ENCODE measurements at regions of chr2 and their contacts with region 1.

Region 1: GRCh38 chr2:37376421-37377186 is 32.2 kb downstream of the QPCT start:
- DNase-seq: peak; percentile 66
- ATAC-seq: peak; percentile 83
- H3K4me3 Mint-ChIP-seq: peak overlapping the region; percentile 44
- H3K27ac Mint-ChIP-seq: peak overlapping the region; percentile 83
- H3K4me1 Mint-ChIP-seq: peaks cover 34% of the 10 kb centered on the region
- H3K27me3 Mint-ChIP-seq: peaks cover 47% of the 10 kb centered on the region

Region 2: DNA sequence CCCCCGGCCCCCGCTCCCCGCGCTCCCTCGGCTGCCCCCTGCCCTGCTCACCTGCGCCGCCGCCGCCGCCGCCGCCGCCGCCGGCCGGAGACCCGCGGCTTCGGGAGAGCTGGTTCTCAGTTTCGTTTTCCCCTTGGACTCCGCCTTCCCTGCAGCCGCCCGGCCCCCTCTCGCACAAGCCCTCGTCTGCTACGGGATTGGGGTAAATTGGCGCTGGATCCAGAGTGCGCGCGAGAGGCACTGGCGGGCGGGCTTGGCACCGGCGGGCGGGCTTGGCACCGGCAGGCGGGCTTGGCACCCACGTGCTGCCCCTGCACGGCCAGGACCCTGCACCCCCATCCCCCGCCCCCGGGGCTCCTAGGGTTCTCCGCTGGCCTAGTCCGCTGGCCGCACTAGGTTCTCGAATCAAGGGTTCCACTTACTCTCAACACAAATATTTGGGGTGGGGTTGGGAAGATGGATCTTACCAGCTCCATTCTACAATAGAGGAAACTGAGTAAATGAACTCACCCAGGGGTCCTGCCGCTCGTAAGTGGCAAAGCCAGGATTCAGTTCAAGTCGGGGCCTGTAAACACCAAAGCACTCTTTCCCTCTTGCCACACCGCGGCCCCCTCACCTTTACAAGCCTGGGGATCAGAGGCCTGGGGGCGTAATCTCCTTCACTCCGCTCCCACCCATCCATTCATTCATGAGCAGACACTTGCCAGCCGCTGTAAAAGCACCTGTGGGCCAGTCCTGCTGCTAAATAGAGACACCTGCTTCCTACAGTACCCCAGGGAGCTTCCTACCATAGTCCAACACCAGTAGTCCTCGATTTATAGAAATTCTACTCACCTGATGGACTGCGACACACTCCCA is 219.5 kb before region 1 on chr2 and contains the start of gene EIF2AK2:
- CTCF ChIA-PET with region 1: no interaction called
- POLR2A ChIA-PET with region 1: no interaction called
- intact Hi-C with region 1: no loop called
- DNase-seq: peak; percentile 89
- ATAC-seq: peak; percentile 93
- H3K4me3 Mint-ChIP-seq: peak within 1 kb of the TSS; percentile 85
- H3K27ac Mint-ChIP-seq: peak within 1 kb of the TSS; percentile 89
- H3K4me1 Mint-ChIP-seq: peaks cover 40% of the 10 kb centered on the region
- H3K27me3 Mint-ChIP-seq: no peaks in the 10 kb centered on the region
- total RNA-seq, gene EIF2AK2: 66.4 to 70.6 TPM

Region 3: DNA sequence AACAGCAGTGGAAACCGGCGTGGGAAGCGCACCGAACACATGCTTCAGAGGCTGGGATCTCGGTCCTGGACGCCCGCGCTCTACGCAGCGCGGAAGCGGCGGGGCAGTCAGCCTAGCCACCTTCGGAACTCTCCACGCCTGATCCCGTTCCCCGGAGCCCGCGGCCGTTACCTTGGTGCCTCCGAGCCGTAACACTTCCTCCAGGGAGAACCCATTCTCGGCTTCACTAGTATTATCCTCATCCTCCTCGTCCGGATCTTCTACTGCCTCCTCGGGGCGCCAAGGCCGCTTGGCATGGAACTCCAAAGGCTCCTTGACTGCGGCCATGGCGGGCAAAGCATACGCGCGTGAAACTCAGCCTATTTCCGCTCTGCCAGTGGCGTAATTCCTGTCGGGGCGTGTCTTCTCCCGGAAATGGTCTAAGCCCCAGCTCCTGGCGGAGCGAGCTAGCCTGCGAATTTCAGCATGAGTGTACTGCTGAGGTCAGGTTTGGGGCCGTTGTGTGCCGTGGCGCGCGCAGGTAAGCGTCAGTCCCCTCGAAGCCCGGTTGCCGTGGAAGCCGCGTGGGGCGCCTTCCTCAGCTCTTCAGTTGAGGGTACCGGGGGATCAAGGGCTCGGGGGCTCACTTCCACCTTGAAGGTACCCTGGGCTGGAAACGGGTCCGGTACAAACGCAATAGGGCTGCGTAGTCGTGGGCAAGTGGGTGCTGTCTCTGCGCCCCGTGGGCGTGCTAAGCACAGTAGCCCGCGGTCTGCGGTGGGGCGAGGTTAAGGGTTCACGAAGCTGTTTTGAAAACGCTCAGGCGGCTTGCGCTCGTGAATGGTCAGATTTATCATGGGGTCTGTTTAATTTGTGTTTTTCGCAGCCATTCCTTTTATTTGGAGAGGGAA is 145.1 kb before region 1 on chr2 and contains the starts of genes CEBPZ and NDUFAF7:
- CTCF ChIA-PET with region 1: no interaction called
- POLR2A ChIA-PET with region 1: no interaction called
- intact Hi-C with region 1: loop called (anchors 2 kb)
- DNase-seq: peak; percentile 95
- ATAC-seq: peak; percentile 96
- H3K4me3 Mint-ChIP-seq: no peak within 1 kb of the TSS
- H3K27ac Mint-ChIP-seq: no peak within 1 kb of the TSS
- H3K4me1 Mint-ChIP-seq: peaks cover 39% of the 10 kb centered on the region
- H3K27me3 Mint-ChIP-seq: no peaks in the 10 kb centered on the region
- total RNA-seq, gene CEBPZ: 81.8 to 107 TPM
- total RNA-seq, gene NDUFAF7: 20.8 to 22.9 TPM

Region 4: GRCh38 chr2:37365669-37366068 is 10.9 kb before region 1 on chr2:
- CTCF ChIA-PET with region 1: interaction called, 18 read pairs
- POLR2A ChIA-PET with region 1: interaction called, 5 read pairs
- intact Hi-C with region 1: loop called (anchors 1 kb)
- DNase-seq: peak; percentile 28
- ATAC-seq: peak; percentile 66
- H3K4me3 Mint-ChIP-seq: no peak overlapping the region
- H3K27ac Mint-ChIP-seq: no peak overlapping the region
- H3K4me1 Mint-ChIP-seq: no peaks in the 10 kb centered on the region
- H3K27me3 Mint-ChIP-seq: peaks cover 33% of the 10 kb centered on the region

Region 5: DNA sequence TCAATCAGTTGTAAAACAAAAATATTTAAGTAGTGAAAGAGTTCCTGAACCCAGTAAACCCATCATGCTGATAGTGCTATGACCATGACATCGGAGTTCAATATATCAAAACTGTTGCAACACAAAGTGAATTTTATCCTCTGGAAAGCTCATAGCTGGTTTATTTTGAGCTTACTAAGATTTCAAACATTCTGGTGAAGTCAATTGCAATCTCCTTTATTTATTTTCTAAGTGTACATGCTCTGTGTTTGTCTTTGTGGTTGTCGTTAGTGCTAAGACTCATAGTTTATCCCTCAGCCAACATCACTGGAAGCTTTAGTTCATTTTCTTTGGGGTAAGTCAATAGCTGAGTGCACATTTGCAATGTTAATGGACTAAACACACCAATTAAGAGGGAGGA is 59.7 kb after region 1 on chr2:
- CTCF ChIA-PET with region 1: no interaction called
- POLR2A ChIA-PET with region 1: no interaction called
- intact Hi-C with region 1: no loop called
- DNase-seq: no peak
- ATAC-seq: no peak
- H3K4me3 Mint-ChIP-seq: no peak overlapping the region
- H3K27ac Mint-ChIP-seq: no peak overlapping the region
- H3K4me1 Mint-ChIP-seq: no peaks in the 10 kb centered on the region
- H3K27me3 Mint-ChIP-seq: peaks cover 3% of the 10 kb centered on the region

Region 6: GRCh38 chr2:37623971-37624900 is 247.6 kb after region 1 on chr2:
- CTCF ChIA-PET with region 1: no interaction called
- POLR2A ChIA-PET with region 1: no interaction called
- intact Hi-C with region 1: loop called in 1 of 2 experiments (anchors 1 kb)
- DNase-seq: peak; percentile 45
- ATAC-seq: peak; percentile 78
- H3K4me3 Mint-ChIP-seq: peak overlapping the region; percentile 48
- H3K27ac Mint-ChIP-seq: peak overlapping the region; percentile 85
- H3K4me1 Mint-ChIP-seq: peaks cover 76% of the 10 kb centered on the region
- H3K27me3 Mint-ChIP-seq: no peaks in the 10 kb centered on the region

Region 7: DNA sequence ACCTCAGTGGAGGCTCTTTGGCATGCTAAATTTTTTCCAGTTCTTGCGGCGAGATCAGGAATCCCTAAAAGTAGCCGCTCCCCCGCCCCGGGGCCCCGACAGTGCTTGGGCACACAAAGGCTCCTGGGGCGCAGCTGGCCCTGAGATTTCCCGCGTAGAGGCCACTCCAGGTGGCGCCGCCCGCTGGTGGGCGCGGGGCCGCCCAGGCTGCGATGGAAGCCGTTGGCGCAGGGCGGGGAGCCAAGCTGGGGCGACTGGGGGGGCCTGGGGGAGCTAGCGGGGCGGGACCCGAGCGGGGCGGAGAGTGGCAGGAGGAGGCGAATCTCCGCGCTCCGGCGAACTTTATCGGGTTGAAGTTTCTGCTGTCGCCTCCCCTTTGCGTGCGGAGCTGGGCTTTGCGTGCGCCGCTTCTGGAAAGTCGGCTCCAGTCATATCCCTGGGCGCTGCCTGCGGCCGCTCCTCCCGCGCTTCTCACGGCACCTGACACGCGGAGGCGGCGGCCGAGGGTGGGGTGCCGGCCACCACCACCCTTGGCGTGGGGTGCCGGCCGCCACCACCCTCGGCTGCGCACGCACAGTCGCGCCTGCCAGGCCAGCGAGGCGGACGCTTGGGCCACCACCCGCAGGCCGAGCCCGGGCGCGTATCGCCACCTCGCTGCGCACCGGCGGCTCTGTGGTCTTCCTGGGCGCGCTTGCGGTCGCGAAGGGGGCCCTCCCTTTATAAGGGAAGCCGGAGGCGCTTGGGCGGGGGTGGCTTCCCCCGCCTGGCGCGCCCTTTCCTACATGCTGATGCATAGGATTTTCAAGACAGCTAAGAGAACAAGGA is 700.2 kb after region 1 on chr2:
- CTCF ChIA-PET with region 1: no interaction called
- POLR2A ChIA-PET with region 1: no interaction called
- intact Hi-C with region 1: loop called in 1 of 2 experiments (anchors 5 kb)
- DNase-seq: peak; percentile 90
- ATAC-seq: peak; percentile 75
- H3K4me3 Mint-ChIP-seq: peak overlapping the region; percentile 71
- H3K27ac Mint-ChIP-seq: peak overlapping the region; percentile 88
- H3K4me1 Mint-ChIP-seq: peaks cover 24% of the 10 kb centered on the region
- H3K27me3 Mint-ChIP-seq: peaks cover 64% of the 10 kb centered on the region